A549 (cell line): ENCODE measurements at regions of chr2 and their contacts with region 1.

Region 1: GRCh38 chr2:229800997-229801754 is 86.8 kb upstream of the DNER start:
- DNase-seq: peak; percentile 49 to 69
- ATAC-seq: peak; percentile 89 to 90
- H3K4me3 ChIP-seq: no peak overlapping the region
- H3K27ac ChIP-seq: peak overlapping the region in 1 of 2 experiments; percentile 54; a peak in 2 of 6 replicates
- H3K4me1 ChIP-seq: no peaks in the 10 kb centered on the region; the same call in 2 of the 3 replicates
- CTCF ChIP-seq: peak; percentile 82
- EP300 ChIP-seq: no peak
- POLR2A ChIP-seq: no peak
- RAD21 ChIP-seq: peak; percentile 59 to 61

Region 2: DNA sequence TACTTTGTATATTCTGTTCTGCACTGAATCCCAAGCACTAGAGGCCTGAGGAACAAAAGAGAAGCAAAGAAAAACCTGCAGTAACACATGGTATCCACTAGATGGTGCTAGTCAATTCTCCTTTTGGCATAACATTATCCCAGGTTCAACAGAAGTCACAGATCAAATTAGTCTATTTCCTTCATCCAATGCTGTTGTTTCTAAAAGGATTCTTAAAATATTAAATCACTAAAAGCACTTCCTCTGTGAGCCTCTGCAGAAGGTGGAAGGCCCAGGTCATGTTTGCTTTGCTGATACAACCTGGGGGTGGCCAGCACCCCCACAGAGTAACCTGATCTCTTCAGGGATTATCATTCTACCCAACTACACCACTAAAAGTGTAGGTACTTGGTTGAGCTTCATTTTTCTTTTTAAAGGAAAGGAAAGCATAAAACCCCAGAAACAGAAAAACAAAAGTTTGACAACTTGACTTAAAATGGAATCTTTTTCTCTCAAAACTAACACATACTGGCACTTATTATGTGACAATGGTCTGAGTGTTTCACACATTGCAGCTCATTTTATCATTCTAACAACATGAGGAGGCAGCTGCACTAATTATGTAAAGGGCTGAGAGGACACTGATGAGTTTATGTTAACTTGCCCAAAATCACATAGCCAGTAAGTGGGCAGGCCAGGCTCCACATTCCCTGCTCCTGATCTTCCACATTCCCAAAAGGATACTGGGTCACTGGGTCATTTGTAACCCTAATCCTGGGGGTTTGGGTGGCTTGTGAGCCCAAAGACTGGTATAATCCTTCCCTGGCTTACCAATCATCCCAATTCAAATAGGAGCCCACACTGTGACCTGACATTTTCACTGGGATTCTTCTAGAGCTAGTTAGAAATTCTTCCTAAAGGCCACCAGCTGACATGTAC is 20.1 kb before region 1 on chr2:
- CTCF ChIA-PET with region 1: interaction called, 39 read pairs
- POLR2A ChIA-PET with region 1: no interaction called
- DNase-seq: peak; percentile 24 to 45
- ATAC-seq: peak; percentile 84 to 91
- H3K4me3 ChIP-seq: no peak overlapping the region
- H3K27ac ChIP-seq: no peak overlapping the region
- H3K4me1 ChIP-seq: no peaks in the 10 kb centered on the region
- CTCF ChIP-seq: peak; percentile 77
- EP300 ChIP-seq: no peak
- POLR2A ChIP-seq: no peak
- RAD21 ChIP-seq: peak; percentile 35 to 47; a peak in 3 of 5 replicates

Region 3: DNA sequence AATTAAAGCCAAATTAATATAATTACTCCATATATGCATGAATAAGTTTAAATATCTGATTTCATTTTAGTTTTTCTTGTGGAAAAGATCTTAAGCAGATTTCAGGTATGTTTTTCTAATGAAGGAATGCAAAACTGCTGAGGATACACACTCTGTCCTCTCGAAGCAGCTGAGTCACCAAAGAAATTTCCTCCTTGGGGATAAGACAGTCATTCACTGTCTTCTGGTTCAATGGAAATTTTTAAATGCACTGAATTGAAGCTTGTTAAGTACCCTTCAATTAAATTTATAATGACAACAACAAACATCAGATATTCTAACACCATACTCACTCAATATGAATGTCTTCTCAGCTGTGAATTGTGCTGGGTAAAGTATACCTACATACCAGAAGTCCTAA is 14.7 kb after region 1 on chr2:
- CTCF ChIA-PET with region 1: interaction called, 11 read pairs
- POLR2A ChIA-PET with region 1: no interaction called
- DNase-seq: peak; percentile 6 to 9
- ATAC-seq: peak; percentile 62 to 68; a peak in 3 of 6 replicates
- H3K4me3 ChIP-seq: no peak overlapping the region
- H3K27ac ChIP-seq: no peak overlapping the region; a peak in 1 of 6 replicates
- H3K4me1 ChIP-seq: peaks cover 18% of the 10 kb centered on the region
- CTCF ChIP-seq: no peak
- EP300 ChIP-seq: no peak
- POLR2A ChIP-seq: no peak
- RAD21 ChIP-seq: no peak